Activated T-helper 1 cell treated with anti-CD3 and anti-CD28 coated beads, Interleukin-12 subunit alpha, Interleukin-12 subunit beta, Interleukin-2, Interleukin-4 antibody, amounts not matched to agents 30 ng/mL and 10 ng/mL and 1 ng/mL, durations not matched to agents 14 hours and 24 hours and 36 hours (primary cell): ENCODE measurements at regions of chr5 and their contacts with region 1.

Region 1: DNA sequence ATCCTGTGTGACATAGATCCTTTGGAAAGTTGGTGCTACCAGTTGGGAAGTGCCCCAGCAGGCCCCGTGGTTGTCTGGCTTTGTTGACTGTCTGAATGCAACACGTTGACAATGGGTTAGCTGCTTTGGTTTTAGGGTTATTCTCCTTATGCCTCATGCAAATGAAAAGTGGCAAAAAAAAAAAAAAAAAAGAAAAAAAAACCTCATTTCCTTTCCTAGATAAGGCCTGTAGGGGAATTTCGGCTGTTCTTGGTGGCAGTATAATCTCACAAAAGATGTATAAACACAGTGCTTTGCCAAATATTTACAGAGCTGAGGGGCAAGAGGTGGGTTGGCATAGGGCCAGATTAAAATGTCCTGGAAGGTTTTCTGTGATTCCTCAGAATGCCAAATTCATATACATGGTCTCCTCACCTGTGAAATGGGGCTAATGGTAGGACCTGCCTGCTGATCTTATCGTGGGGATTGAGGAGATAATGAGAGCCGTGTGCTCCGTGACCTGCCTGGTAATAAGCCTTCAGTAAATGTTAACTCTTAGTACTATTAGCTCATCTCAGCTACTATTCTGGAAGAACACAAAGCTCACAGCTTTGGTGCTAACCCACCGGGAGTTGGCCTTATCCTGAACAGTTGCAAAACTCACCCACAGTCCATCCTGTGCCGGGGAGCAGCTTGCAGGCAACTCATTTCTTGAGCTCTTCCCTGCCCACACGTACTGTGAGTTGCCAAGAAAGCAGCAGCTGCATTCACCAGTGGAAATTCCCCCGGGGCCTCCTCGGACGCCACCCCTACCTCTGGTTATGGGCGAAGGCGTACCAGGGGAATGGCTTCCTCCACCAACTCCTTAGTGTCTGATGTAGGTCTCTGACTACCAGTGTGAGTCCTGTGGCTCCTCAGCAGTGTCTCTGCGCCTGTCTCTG is 220.3 kb downstream of the NR3C1 start:
- DNase-seq: peak; percentile 68
- H3K4me3 Mint-ChIP-seq: peak overlapping the region; percentile 29
- H3K27ac Mint-ChIP-seq: peak overlapping the region; percentile 93
- H3K4me1 Mint-ChIP-seq: peaks cover 77% of the 10 kb centered on the region
- H3K27me3 Mint-ChIP-seq: no peaks in the 10 kb centered on the region

Region 2: GRCh38 chr5:143002459-143003328 is 180.5 kb before region 1 on chr5:
- intact Hi-C with region 1: loop called (anchors 1 kb)
- DNase-seq: peak; percentile 66
- H3K4me3 Mint-ChIP-seq: peak overlapping the region; percentile 75
- H3K27ac Mint-ChIP-seq: peak overlapping the region; percentile 98
- H3K4me1 Mint-ChIP-seq: peaks cover 89% of the 10 kb centered on the region
- H3K27me3 Mint-ChIP-seq: no peaks in the 10 kb centered on the region

Region 3: DNA sequence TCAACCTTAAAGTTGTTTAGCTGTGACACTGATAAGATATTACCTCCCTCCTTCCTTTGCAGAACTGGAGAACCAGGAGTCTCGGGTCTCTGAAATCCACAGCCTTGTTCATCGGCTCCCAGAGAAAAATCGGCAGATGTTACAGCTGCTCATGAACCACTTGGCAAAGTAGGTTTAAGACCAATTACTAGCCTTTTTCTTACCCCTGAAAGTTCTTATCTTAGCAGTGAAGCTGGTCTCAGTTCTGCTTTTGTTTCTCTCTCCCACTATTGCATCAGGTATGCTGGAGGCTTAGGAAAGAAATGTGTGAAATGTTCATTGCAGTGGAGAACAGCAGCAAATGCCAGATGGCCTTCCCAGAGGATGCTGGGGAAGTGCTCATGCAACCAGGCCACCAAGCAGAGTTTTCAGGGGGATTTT is 125.6 kb before region 1 on chr5:
- intact Hi-C with region 1: loop called (anchors 1 kb)
- DNase-seq: no peak
- H3K4me3 Mint-ChIP-seq: no peak overlapping the region
- H3K27ac Mint-ChIP-seq: peak overlapping the region; percentile 97
- H3K4me1 Mint-ChIP-seq: peaks cover 77% of the 10 kb centered on the region
- H3K27me3 Mint-ChIP-seq: no peaks in the 10 kb centered on the region

Region 4: GRCh38 chr5:143142596-143143435 is 40.3 kb before region 1 on chr5:
- intact Hi-C with region 1: no loop called
- DNase-seq: no peak
- H3K4me3 Mint-ChIP-seq: no peak overlapping the region
- H3K27ac Mint-ChIP-seq: no peak overlapping the region
- H3K4me1 Mint-ChIP-seq: peaks cover 14% of the 10 kb centered on the region
- H3K27me3 Mint-ChIP-seq: no peaks in the 10 kb centered on the region

Region 5: GRCh38 chr5:143196601-143197259 is 13.6 kb after region 1 on chr5:
- intact Hi-C with region 1: loop called (anchors 1 kb)
- DNase-seq: no peak
- H3K4me3 Mint-ChIP-seq: peak overlapping the region; percentile 30
- H3K27ac Mint-ChIP-seq: peak overlapping the region; percentile 77
- H3K4me1 Mint-ChIP-seq: peaks cover 30% of the 10 kb centered on the region
- H3K27me3 Mint-ChIP-seq: no peaks in the 10 kb centered on the region

Region 6: GRCh38 chr5:143403593-143404415 is 220.6 kb after region 1 on chr5 and contains the start of gene NR3C1:
- intact Hi-C with region 1: loop called (anchors 1 kb)
- DNase-seq: peak; percentile 82
- H3K4me3 Mint-ChIP-seq: peak within 1 kb of the TSS; percentile 95
- H3K27ac Mint-ChIP-seq: peak within 1 kb of the TSS; percentile 99
- H3K4me1 Mint-ChIP-seq: peaks cover 48% of the 10 kb centered on the region
- H3K27me3 Mint-ChIP-seq: no peaks in the 10 kb centered on the region
- total RNA-seq, gene NR3C1: 62.7 TPM in 2 replicates